Activated CD4-positive, alpha-beta T cell treated with anti-CD3 and anti-CD28 coated beads for 36 hours (primary cell): ENCODE measurements at regions of chr7 and their contacts with region 1.

Region 1: DNA sequence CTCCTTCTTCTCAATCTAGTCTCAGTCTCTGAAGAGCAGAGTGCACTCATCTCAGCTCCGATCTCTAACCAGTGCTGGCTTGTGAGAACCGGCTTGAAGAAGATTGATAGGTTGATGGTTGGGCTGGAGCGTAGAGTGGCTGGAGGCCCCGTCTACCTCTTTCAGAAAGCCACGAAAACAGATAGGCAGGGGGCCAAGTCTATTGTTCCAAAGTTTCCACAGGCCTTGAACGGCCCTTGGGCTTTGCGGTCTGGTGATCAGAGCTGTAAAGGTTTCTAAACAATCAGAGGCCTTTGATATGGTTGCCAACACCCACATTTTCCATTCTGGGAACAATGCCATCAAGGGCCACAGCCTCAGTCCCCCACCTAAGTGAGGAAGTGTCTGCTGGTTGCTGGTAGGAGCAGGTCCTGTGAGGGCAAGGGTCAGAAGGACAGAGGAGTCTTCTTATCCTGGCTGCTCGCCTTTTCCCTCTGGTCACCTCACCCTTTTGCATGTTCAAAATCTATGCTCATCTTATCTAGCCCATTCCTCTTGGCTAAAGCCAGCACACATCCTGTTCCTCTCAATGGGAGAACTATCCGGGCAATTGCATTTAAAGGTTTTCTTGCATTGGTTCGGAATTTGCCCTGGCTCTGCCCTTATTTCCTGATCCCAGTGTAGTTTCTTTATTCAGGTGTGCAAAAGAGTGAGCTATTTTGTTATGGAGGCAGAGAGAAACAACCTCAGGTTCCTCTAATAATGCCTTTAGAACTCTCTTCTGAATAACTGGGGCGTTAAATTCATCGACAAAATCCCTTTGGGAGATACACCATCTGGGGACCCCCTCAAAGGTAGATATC is 70.3 kb upstream of the KMT2E start:
- DNase-seq: peak; percentile 87
- ATAC-seq: peak; percentile 68
- H3K4me3 Mint-ChIP-seq: peak overlapping the region; percentile 95
- H3K27ac Mint-ChIP-seq: peak overlapping the region; percentile 99
- H3K4me1 Mint-ChIP-seq: peaks cover 68% of the 10 kb centered on the region
- H3K27me3 Mint-ChIP-seq: no peaks in the 10 kb centered on the region

Region 2: GRCh38 chr7:104956753-104957450 is 13.2 kb after region 1 on chr7:
- CTCF ChIA-PET with region 1: interaction called, 4 read pairs
- POLR2A ChIA-PET with region 1: interaction called, 42 read pairs
- intact Hi-C with region 1: loop called (anchors 1 kb)
- DNase-seq: peak; percentile 64
- ATAC-seq: peak; percentile 87
- H3K4me3 Mint-ChIP-seq: peak overlapping the region; percentile 38
- H3K27ac Mint-ChIP-seq: peak overlapping the region; percentile 96
- H3K4me1 Mint-ChIP-seq: peaks cover 47% of the 10 kb centered on the region
- H3K27me3 Mint-ChIP-seq: no peaks in the 10 kb centered on the region

Region 3: GRCh38 chr7:105137898-105138297 is 194.2 kb after region 1 on chr7:
- CTCF ChIA-PET with region 1: no interaction called
- POLR2A ChIA-PET with region 1: no interaction called
- intact Hi-C with region 1: no loop called
- DNase-seq: no peak
- ATAC-seq: no peak
- H3K4me3 Mint-ChIP-seq: no peak overlapping the region
- H3K27ac Mint-ChIP-seq: no peak overlapping the region
- H3K4me1 Mint-ChIP-seq: peaks cover 5% of the 10 kb centered on the region
- H3K27me3 Mint-ChIP-seq: no peaks in the 10 kb centered on the region

Region 4: GRCh38 chr7:105298439-105298907 is 354.8 kb after region 1 on chr7:
- CTCF ChIA-PET with region 1: no interaction called
- POLR2A ChIA-PET with region 1: no interaction called
- intact Hi-C with region 1: loop called in 1 of 2 experiments (anchors 2 kb)
- DNase-seq: peak; percentile 65
- ATAC-seq: peak; percentile 92
- H3K4me3 Mint-ChIP-seq: peak overlapping the region; percentile 53
- H3K27ac Mint-ChIP-seq: peak overlapping the region; percentile 90
- H3K4me1 Mint-ChIP-seq: peaks cover 58% of the 10 kb centered on the region
- H3K27me3 Mint-ChIP-seq: no peaks in the 10 kb centered on the region

Region 5: GRCh38 chr7:105387621-105388372 is 444.1 kb after region 1 on chr7:
- CTCF ChIA-PET with region 1: no interaction called
- POLR2A ChIA-PET with region 1: no interaction called
- intact Hi-C with region 1: loop called in 1 of 2 experiments (anchors 5 kb)
- DNase-seq: peak; percentile 67
- ATAC-seq: peak; percentile 40
- H3K4me3 Mint-ChIP-seq: peak overlapping the region; percentile 77
- H3K27ac Mint-ChIP-seq: peak overlapping the region; percentile 55
- H3K4me1 Mint-ChIP-seq: peaks cover 35% of the 10 kb centered on the region
- H3K27me3 Mint-ChIP-seq: no peaks in the 10 kb centered on the region

Region 6: GRCh38 chr7:105462765-105463420 is 519.2 kb after region 1 on chr7:
- CTCF ChIA-PET with region 1: no interaction called
- POLR2A ChIA-PET with region 1: no interaction called
- intact Hi-C with region 1: no loop called
- DNase-seq: no peak
- ATAC-seq: no peak
- H3K4me3 Mint-ChIP-seq: no peak overlapping the region
- H3K27ac Mint-ChIP-seq: no peak overlapping the region
- H3K4me1 Mint-ChIP-seq: no peaks in the 10 kb centered on the region
- H3K27me3 Mint-ChIP-seq: no peaks in the 10 kb centered on the region

Region 7: DNA sequence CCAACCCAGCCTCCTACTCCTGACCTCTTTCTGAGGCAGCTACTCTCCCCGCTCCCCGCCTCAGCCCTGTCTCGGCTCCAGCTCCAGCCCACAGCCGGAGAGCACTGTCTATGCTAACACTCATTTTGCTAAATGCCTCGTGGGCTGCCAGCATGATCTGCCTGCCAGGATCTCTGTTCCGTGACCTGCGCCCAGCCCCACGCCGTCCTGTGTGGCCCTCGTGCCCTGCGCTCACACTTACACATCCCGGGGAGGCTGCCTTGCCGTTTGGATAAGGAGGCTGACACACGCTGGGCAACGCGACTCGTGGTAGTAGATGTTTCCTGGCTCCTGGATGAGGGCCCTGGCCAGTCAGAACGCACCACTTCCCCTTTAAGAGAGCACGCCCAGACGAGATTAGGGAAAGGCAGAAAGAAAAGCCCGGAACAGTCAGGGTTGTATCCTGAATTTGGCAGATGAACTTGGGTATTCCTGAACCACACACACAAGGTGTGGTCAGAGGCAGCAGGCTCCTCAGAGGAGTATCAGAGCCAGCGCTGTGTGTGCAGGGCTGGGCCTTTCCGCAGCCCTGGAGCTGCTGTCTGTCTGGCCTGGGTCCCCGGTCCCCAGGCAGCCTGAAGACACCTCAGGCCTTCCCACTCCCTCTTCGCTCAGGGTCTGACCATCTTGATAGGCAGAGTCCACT is 735.2 kb after region 1 on chr7:
- CTCF ChIA-PET with region 1: no interaction called
- POLR2A ChIA-PET with region 1: no interaction called
- intact Hi-C with region 1: loop called in 1 of 2 experiments (anchors 5 kb)
- DNase-seq: peak; percentile 62
- ATAC-seq: peak; percentile 21
- H3K4me3 Mint-ChIP-seq: peak overlapping the region; percentile 83
- H3K27ac Mint-ChIP-seq: peak overlapping the region; percentile 93
- H3K4me1 Mint-ChIP-seq: peaks cover 63% of the 10 kb centered on the region
- H3K27me3 Mint-ChIP-seq: no peaks in the 10 kb centered on the region

Region 8: GRCh38 chr7:106425017-106425719 is 1481.4 kb after region 1 on chr7:
- CTCF ChIA-PET with region 1: no interaction called
- POLR2A ChIA-PET with region 1: no interaction called
- intact Hi-C with region 1: loop called in 1 of 2 experiments (anchors 5 kb)
- DNase-seq: peak; percentile 89
- ATAC-seq: peak; percentile 79
- H3K4me3 Mint-ChIP-seq: peak overlapping the region; percentile 70
- H3K27ac Mint-ChIP-seq: peak overlapping the region; percentile 99
- H3K4me1 Mint-ChIP-seq: peaks cover 88% of the 10 kb centered on the region
- H3K27me3 Mint-ChIP-seq: peaks cover 2% of the 10 kb centered on the region